Panc1 (cell line): ENCODE measurements at regions of chr15 and their contacts with region 1.

Region 1: GRCh38 chr15:40044717-40045571 is 6.0 kb upstream of the SRP14 start:
- DNase-seq: no peak
- ATAC-seq: peak; percentile 98
- H3K4me3 ChIP-seq: peak overlapping the region; percentile 20 to 58
- H3K27ac ChIP-seq: peak overlapping the region; percentile 53
- H3K4me1 ChIP-seq: peaks cover 35% of the 10 kb centered on the region
- H3K27me3 ChIP-seq: no peaks in the 10 kb centered on the region
- CTCF ChIP-seq: peak; percentile 99

Region 2: GRCh38 chr15:40160689-40161688 is 116.0 kb after region 1 on chr15 and contains the start of gene BUB1B:
- CTCF ChIA-PET with region 1: interaction called, 3 read pairs
- POLR2A ChIA-PET with region 1: no interaction called
- in situ Hi-C with region 1: no loop called
- intact Hi-C with region 1: loop called (anchors 5 kb)
- DNase-seq: peak; percentile 90
- ATAC-seq: peak; percentile 99
- H3K4me3 ChIP-seq: peak within 1 kb of the TSS; percentile 90 to 96
- H3K27ac ChIP-seq: peak within 1 kb of the TSS; percentile 88
- H3K4me1 ChIP-seq: peaks cover 25% of the 10 kb centered on the region
- H3K27me3 ChIP-seq: no peaks in the 10 kb centered on the region
- CTCF ChIP-seq: no peak
- total RNA-seq, gene BUB1B: 67.8 TPM

Region 3: GRCh38 chr15:40307421-40308211 is 262.7 kb after region 1 on chr15 and contains the start of gene PLCB2:
- CTCF ChIA-PET with region 1: no interaction called
- POLR2A ChIA-PET with region 1: no interaction called
- in situ Hi-C with region 1: no loop called
- intact Hi-C with region 1: no loop called
- DNase-seq: no peak
- ATAC-seq: peak; percentile 70
- H3K4me3 ChIP-seq: no peak within 1 kb of the TSS
- H3K27ac ChIP-seq: no peak within 1 kb of the TSS
- H3K4me1 ChIP-seq: peaks cover 5% of the 10 kb centered on the region
- H3K27me3 ChIP-seq: no peaks in the 10 kb centered on the region
- CTCF ChIP-seq: no peak; the same call in 1 of the 2 replicates
- total RNA-seq, gene PLCB2: 1.7 TPM